ENCODE measurements at regions of chrX and their contacts with region 1.

Region 1: GRCh38 chrX:47482512-47483309 is at the start of gene ZNF41:
- DNase-seq: peak; percentile 67 to 86
- ATAC-seq: peak; percentile 88 to 89
- H3K4me3 ChIP-seq: peak within 1 kb of the TSS; percentile 66 to 81 (median 75)
- H3K27ac ChIP-seq: peak within 1 kb of the TSS; percentile 93 to 97 (median 96)
- H3K4me1 ChIP-seq: peaks cover 8 to 26% of the 10 kb centered on the region in 2 donors
- H3K27me3 ChIP-seq: no peaks in the 10 kb centered on the region
- CTCF ChIP-seq: no peak
- POLR2A ChIP-seq: peak; percentile 45 to 55
- total RNA-seq, gene ZNF41: 8.7 to 14.9 (median 11.7) TPM

Region 2: DNA sequence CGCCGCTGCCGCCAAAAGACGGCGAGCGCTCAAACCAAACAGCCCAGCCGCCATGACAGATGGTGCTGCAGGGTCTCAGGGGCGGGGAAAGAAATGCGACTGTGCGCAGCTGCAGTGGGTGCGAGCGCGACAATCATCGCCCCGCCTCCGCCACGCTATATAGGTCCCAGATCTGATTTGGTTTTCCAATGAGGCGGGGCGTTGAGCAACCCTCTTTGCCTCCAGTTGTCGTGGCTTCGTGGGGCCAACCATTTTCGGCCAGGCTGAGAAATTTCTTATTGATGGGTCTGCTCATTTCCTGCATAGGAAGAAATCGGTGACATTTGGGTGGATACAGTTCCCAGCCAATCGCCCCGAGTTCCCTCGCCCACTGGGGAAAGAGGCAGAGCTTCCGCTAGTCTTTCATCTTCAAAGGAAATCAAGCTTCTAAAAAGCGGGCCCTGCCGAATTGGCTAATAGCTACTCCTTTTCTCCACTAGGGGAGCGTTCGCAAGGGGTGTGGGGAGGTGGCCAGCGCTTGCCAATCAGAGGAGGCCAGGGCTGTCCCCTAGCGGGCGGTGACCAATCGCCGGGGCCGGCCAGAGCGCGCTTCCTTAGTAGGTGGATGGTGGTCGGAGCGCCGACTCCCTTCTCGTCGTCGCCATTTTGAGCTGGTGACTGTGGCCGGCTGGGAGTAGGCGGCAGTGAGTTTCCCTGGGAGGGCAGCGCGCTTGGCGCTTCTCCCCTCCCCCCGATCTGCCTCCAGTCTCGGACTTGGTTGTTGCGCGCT is 337.9 kb before region 1 on chrX and contains the starts of genes NDUFB11 and RBM10:
- in situ Hi-C with region 1: no loop called
- intact Hi-C with region 1: loop called (anchors 10 kb)
- DNase-seq: peak; percentile 92 to 95
- ATAC-seq: peak; percentile 86 to 91
- H3K4me3 ChIP-seq: peak within 1 kb of the TSS; percentile 78 to 96 (median 82)
- H3K27ac ChIP-seq: peak within 1 kb of the TSS; percentile 95 to 99 (median 96)
- H3K4me1 ChIP-seq: peaks cover 8 to 12% of the 10 kb centered on the region in 2 donors
- H3K27me3 ChIP-seq: no peaks in the 10 kb centered on the region
- CTCF ChIP-seq: peak; percentile 73 to 89 (median 83)
- POLR2A ChIP-seq: peak; percentile 72 to 77
- total RNA-seq, gene NDUFB11: 105 to 172 (median 168) TPM
- total RNA-seq, gene RBM10: 18.7 to 49.3 (median 23.5) TPM

Region 3: GRCh38 chrX:47233337-47234113 is 249.2 kb before region 1 on chrX:
- in situ Hi-C with region 1: no loop called
- intact Hi-C with region 1: loop called (anchors 1 kb)
- DNase-seq: peak; percentile 91 to 94
- ATAC-seq: peak; percentile 92 to 94
- H3K4me3 ChIP-seq: peak overlapping the region; percentile 57 to 84 (median 74)
- H3K27ac ChIP-seq: peak overlapping the region; percentile 88 to 93 (median 91)
- H3K4me1 ChIP-seq: peaks cover 0 to 3% of the 10 kb centered on the region in 2 donors
- H3K27me3 ChIP-seq: no peaks in the 10 kb centered on the region
- CTCF ChIP-seq: no peak
- POLR2A ChIP-seq: peak; percentile 36 to 76

Region 4: GRCh38 chrX:47410649-47411048 is 72.1 kb before region 1 on chrX:
- in situ Hi-C with region 1: no loop called
- intact Hi-C with region 1: no loop called
- DNase-seq: no peak
- ATAC-seq: no peak
- H3K4me3 ChIP-seq: no peak overlapping the region
- H3K27ac ChIP-seq: no peak overlapping the region
- H3K4me1 ChIP-seq: no peaks in the 10 kb centered on the region
- H3K27me3 ChIP-seq: no peaks in the 10 kb centered on the region
- CTCF ChIP-seq: no peak
- POLR2A ChIP-seq: no peak

Region 5: DNA sequence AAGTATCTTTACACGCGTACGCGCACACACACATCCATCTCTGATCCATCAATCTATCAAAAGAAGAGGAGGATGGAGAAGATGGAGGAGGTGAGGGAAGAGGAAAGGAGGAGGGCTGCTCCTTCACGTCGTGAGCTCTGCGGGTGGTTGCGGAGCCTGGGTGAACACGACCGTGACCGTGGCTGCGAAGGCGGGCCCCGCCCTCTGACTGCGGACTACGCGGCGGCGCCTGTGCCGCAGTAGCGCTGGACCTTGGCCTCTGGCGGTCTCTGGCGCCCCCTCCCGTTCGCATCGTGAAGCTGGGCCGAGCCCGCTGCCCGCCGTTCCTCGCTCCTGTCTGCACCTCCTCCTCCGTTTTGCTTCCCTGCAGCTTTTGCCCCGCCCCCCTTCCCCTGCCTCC is 40.6 kb after region 1 on chrX:
- in situ Hi-C with region 1: no loop called
- intact Hi-C with region 1: loop called (anchors 5 kb)
- DNase-seq: peak; percentile 50 to 70
- ATAC-seq: peak; percentile 85 to 96
- H3K4me3 ChIP-seq: peak overlapping the region; percentile 54 to 64 (median 60)
- H3K27ac ChIP-seq: peak overlapping the region in 2 of 4 donors; percentile 26 to 31
- H3K4me1 ChIP-seq: no peaks in the 10 kb centered on the region
- H3K27me3 ChIP-seq: no peaks in the 10 kb centered on the region
- CTCF ChIP-seq: peak; percentile 63 to 88 (median 85)
- POLR2A ChIP-seq: no peak

Region 6: DNA sequence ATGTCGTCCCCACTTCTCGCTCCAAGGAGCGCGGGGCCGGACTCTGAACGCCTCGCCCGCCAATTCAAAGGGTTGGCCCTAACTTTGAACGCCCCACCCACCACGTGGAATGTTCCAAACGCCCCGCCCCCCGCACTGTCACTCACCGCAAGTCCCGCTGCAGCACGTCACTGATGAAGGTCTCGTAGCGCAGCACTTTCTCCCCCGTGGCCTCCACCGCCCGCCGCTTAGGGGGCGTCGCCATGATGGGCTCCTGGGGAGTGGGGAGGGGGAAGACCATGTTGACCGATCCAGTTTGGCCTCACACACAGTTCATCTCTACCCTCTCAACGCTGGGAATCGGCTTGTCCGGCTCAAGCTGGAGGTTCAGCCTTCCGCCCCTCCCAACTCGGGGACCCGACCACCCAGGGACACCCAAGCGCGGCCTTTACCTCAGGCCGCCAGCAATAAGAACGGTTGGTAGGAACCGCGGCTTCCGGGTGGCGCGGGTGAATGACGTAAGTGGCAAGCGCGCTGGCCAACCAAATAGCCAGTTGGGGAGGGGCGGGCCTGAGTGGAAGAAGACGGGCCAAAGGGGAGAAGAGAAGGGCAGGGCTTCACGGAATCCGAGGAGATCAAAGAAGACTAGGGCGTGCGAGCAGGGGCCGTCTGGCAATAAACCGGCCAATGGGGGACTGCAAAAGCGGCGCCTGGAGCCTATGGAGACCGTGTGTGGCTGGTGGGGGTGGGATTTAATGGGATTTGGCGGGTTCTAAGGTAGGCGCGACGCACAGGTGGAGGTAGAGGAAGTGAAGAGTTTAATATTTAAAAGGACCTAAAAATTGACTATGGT is 176.2 kb after region 1 on chrX and contains the start of gene UXT:
- in situ Hi-C with region 1: no loop called
- intact Hi-C with region 1: loop called (anchors 2 kb)
- DNase-seq: peak; percentile 79 to 89
- ATAC-seq: peak; percentile 95 to 96
- H3K4me3 ChIP-seq: peak within 1 kb of the TSS; percentile 57 to 81 (median 70)
- H3K27ac ChIP-seq: peak within 1 kb of the TSS; percentile 88 to 96 (median 92)
- H3K4me1 ChIP-seq: no peaks in the 10 kb centered on the region
- H3K27me3 ChIP-seq: no peaks in the 10 kb centered on the region
- CTCF ChIP-seq: no peak
- POLR2A ChIP-seq: peak; percentile 66 to 68
- total RNA-seq, gene UXT: 92.3 to 153 (median 109) TPM

Region 7: GRCh38 chrX:49172280-49172780 is 1689.6 kb after region 1 on chrX:
- in situ Hi-C with region 1: no loop called
- intact Hi-C with region 1: loop called (anchors 10 kb)
- DNase-seq: peak; percentile 41 to 77
- ATAC-seq: peak; percentile 72 to 82
- H3K4me3 ChIP-seq: peak overlapping the region; percentile 63 to 74 (median 64)
- H3K27ac ChIP-seq: peak overlapping the region; percentile 88 to 94 (median 90)
- H3K4me1 ChIP-seq: peaks cover 6 to 12% of the 10 kb centered on the region in 2 donors
- H3K27me3 ChIP-seq: no peaks in the 10 kb centered on the region
- CTCF ChIP-seq: no peak
- POLR2A ChIP-seq: peak; percentile 46 to 51

Measured in gastrocnemius medialis (tissue), 4 donors.